Dendritic cell treated with granulocyte-macrophage colony-stimulating factor and Interleukin-4, amounts not matched to agents 40 ng/mL and 50 ng/mL, for 4 days (primary cell): ENCODE measurements at regions of chr4 and their contacts with region 1.

Region 1: DNA sequence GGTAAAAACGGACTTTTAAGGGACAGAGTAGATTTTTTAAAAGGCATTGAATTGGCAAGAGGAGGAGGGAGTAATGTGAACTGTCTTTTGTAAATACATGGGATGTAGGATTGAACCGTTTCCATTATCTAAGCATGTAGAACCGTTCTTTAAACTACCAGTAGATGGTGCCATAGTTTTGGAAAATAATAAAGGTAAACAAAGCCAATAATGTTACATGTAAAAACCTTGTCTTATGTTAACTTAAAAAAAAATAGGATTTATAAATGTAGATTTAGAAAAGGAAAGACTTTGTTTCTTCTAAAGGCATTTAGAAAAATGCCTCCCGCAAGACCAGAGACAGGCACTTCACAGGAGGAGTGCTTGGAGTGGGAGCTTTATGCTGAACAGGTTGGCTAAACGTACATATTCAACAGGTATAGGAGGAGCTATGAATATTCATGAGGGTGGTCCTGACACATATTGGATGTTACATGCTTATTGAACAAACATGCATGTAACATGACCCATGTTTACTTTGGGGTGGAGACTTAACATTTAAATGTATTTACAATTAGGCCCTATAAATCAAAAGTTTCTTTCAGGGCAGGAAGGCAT is 45.5 kb upstream of the FAM241A start:
- H3K4me3 Mint-ChIP-seq: no peak overlapping the region
- H3K27ac Mint-ChIP-seq: no peak overlapping the region
- H3K4me1 Mint-ChIP-seq: peaks cover 13% of the 10 kb centered on the region
- H3K27me3 Mint-ChIP-seq: peaks cover 1% of the 10 kb centered on the region

Region 2: DNA sequence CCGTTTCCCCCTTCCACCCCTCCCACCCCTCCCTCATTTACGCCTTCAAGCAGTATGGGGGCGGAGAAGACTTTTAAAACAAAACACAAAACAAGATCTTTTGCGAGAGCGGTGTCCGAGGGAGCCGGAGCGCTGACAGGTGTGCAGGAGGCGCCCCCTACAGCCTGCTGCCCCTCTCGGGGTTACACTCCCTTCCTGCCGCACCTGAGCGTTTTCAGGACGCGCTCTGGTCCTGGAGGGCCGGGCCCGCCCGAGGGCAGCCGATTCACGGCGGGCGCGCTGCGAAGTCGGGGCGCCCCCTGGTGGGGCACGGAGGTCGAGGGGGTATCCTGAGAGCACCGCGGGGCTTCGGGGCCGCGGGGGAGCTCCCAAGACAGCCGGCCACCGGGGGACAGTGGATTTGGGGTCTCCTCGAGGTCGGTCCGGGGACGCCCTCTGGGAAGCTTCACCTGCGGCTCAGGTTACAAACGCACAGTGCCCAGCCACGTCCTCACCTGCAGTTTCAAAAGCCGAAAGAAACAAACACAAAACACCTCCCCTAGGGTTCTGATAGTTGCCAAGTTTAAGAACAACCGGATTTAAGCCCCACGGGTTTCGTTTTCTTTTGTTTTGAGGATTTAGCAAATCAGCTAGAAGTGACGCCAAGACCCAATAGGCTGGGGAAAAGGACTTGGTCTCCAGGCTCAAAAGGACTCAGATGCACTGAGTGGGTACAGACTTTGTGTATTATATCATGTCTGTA is 424.1 kb after region 1 on chr4:
- intact Hi-C with region 1: loop called (anchors 10 kb)
- H3K4me3 Mint-ChIP-seq: peak overlapping the region; percentile 80
- H3K27ac Mint-ChIP-seq: peak overlapping the region; percentile 12
- H3K4me1 Mint-ChIP-seq: peaks cover 37% of the 10 kb centered on the region
- H3K27me3 Mint-ChIP-seq: peaks cover 81% of the 10 kb centered on the region